Activated naive CD4-positive, alpha-beta T cell treated with anti-CD3 and anti-CD28 coated beads, Interleukin-2, amount 10 ng/mL, durations not matched to agents 7 days and 5 days (primary cell): ENCODE measurements at regions of chr19 and their contacts with region 1.

Region 1: DNA sequence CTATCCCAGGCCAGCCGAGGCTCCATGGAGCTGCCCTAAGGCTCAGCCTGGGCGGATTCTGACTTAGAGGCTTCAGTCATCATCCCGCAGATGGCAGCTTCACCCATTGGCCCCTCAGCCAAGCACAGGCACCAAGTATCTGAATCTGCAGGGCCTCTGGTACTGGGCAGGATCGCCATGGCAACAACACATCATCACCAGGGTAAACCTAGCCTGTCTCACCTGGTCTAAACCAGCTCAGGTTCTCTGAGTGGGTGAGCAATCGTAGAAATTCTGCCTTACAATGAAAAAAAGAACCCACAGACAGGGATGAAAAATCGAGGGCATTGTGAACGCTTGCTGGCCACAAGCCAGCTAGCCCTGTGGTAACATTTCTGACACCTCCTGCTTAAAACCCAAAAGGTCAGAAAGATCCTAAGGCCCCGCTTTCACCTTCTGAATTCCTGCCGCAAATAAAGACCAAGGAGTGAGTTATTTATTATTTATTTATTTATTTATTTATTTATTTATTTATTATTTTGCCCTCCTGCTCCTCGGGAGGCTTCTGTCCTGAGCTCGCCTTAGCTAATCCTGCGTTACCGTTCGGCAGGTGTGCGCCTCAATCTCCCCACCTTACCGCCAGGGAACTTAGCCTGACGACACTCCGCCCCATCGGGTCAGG is 12.0 kb upstream of the CEACAM21 start:
- DNase-seq: peak; percentile 71
- H3K4me3 Mint-ChIP-seq: peak overlapping the region; percentile 68
- H3K27ac Mint-ChIP-seq: peak overlapping the region; percentile 69
- H3K4me1 Mint-ChIP-seq: peaks cover 84% of the 10 kb centered on the region
- H3K27me3 Mint-ChIP-seq: peaks cover 11% of the 10 kb centered on the region

Region 2: DNA sequence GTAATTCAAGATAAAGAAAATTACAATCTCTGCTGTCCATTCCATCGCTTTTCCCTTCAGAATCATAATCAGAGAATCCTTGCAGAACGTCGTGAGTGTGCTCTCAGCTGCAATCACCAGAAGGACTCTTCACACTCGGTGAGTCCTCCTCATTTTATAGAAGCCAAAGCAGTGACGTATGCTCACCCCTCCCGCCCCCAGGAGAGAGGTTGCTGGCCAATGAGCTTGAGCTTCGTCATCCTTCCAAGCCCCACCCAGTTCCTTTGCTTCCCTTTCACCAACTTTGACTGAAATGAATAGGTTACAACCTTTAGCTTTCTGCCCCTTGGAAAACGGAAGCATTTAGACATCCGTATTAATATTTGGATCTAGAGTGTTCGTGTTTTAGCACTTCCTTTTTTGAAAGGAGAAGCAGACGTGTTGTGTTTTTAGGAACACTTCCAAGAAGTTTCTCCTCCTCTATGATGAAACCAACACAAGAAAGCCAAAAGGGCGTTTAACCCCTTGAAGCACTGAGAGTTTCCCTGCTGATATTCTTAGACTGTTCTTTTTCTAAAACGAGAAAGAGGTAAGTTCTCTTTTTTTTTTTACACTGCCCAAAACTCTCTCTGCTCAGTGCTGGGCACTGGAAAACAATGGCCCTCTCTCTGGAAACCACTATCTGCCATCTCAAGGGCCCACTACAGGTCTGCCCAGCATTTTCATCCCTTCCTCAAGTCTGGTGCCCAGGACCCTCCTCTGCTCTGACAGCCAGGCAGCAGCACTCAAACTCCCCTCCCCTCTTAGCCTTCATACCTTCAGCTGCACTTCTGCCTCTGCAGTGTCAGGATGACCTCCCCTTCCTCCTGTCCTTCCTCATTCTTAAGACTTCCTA is 32.3 kb before region 1 on chr19:
- CTCF ChIA-PET with region 1: interaction called, 376 read pairs
- DNase-seq: peak; percentile 91
- H3K4me3 Mint-ChIP-seq: peak overlapping the region; percentile 60
- H3K27ac Mint-ChIP-seq: peak overlapping the region; percentile 78
- H3K4me1 Mint-ChIP-seq: peaks cover 81% of the 10 kb centered on the region
- H3K27me3 Mint-ChIP-seq: peaks cover 36% of the 10 kb centered on the region

Region 3: DNA sequence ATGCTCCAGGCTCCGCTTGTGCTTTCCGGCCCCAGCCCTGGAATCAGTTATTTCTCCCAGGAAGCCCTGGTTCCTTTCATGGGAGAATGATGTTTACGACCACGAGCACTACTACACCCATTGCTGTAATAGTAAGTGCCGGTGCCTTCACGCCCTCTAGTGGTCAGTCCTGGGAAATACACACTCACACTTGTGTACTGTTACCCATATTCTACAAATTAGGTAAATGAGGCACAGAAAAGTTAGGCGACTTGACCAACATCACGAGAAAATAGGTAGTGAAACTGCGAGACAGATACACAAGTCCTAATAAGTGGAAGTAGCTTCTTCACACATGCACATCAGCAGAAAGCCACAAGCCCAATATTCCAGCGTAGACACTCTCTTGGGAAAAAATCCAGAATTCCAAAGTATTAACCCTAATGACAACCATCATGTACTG is 33.6 kb after region 1 on chr19:
- CTCF ChIA-PET with region 1: interaction called, 16 read pairs
- DNase-seq: peak; percentile 86
- H3K4me3 Mint-ChIP-seq: no peak overlapping the region
- H3K27ac Mint-ChIP-seq: no peak overlapping the region
- H3K4me1 Mint-ChIP-seq: peaks cover 12% of the 10 kb centered on the region
- H3K27me3 Mint-ChIP-seq: peaks cover 47% of the 10 kb centered on the region